GM13976 (cell line): ENCODE measurements at regions of chr14 and their contacts with region 1.

Region 1: GRCh38 chr14:22852940-22853767 is 16.8 kb downstream of the MMP14 start:
- DNase-seq: peak; percentile 88
- CTCF ChIP-seq: peak; percentile 98

Region 2: GRCh38 chr14:22112004-22112403 is 741.1 kb before region 1 on chr14:
- in situ Hi-C with region 1: no loop called
- DNase-seq: peak; percentile 26
- CTCF ChIP-seq: peak; percentile 43

Region 3: DNA sequence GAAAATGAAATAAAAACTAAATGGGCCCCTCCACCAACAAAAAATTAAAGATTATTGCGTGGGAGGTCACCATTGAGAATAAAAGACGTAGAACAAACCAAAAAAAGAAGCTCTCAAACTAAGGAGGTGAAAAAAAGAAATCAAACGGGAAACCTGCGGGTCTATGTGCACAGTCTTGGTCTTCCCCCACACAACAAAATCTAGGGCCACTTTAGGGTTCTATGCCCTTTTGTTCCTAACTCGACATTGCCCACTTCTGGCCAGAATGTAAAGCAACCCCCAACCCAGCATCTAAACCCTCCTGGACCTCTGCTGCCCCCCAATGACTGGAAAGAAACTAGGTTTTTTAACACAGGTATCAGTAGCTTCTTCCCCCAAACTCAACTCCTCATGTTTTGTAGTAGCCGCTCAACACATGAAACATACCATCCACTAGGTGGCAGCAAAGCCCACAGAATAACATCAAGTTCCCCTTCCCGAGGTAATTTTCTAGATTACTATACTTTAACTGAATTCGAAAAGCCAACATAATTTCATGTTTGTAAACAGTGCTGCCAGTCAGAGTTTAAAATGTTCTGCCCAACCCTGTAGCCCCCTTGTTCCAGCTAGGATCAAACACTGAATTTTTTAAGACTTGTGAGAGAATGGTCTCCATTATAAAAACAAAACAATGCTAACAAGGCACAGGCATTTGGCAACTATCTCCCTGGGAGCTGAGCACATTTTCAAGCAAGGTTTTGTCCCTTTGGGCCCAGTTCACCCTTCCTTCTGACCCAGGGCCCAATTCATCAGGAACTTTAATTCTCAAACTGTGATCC is 282.8 kb before region 1 on chr14:
- in situ Hi-C with region 1: loop called (anchors 10 kb)
- DNase-seq: peak; percentile 82
- CTCF ChIP-seq: peak; percentile 87

Region 4: DNA sequence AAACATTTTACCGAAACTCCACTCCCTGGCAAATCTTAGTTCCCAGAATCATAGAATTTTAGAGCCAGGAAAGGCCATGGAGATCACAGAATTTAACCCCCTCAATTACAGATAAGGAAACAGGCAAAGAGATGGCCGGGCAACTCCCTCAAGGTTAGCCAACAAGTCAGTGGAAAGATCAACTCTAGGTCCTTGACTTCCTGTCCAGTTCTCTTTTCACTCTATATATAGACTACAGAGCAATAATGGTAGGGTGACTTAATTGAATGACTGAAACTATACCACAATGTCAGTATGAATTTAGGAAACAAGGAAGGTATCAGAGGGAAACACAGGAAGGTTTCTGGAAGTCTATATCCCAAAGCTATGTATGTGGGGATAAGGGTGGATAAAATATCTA is 75.1 kb before region 1 on chr14:
- in situ Hi-C with region 1: loop called (anchors 5 kb)
- DNase-seq: no peak
- CTCF ChIP-seq: no peak

Region 5: DNA sequence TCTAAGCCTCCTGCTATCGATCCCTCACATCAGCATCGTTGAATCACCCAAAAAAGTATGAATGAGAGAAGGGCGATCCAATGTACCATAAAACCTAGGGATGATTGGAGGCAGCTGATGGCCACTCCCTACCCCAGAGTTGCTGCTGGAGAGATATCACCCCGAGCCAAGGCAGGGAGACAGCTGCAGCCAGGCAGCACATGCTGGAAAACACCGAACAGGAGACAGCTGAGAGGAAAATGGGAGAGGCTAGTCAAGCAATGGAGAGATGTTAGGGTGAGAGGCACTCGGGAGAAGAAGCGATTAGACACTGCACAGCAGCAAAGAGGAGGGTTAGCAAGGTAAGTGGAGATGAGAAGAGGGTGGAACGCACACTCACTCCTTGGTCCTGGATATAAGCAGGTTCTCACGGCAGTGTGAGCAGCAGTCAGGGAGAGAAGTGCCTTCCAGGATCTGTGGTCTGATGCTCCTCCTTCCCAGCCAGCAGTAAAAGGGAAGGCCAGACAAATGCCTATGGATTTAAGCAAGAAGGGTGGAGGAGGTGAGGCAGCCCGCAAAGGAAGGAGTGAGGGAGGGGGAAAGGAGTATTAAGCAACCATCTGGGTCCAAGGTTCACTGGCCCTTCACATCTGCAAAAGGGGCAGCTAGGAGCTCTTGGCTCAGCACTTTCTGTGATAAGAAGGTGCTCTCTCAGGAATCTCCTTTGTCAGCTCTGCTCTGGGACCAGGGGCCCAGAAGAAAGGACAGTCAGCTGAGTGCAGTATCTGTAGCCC is 38.0 kb before region 1 on chr14 and contains the start of gene SLC7A7:
- in situ Hi-C with region 1: no loop called
- DNase-seq: no peak
- CTCF ChIP-seq: no peak